ENCODE measurements at regions of chr15 and their contacts with region 1.

Region 1: DNA sequence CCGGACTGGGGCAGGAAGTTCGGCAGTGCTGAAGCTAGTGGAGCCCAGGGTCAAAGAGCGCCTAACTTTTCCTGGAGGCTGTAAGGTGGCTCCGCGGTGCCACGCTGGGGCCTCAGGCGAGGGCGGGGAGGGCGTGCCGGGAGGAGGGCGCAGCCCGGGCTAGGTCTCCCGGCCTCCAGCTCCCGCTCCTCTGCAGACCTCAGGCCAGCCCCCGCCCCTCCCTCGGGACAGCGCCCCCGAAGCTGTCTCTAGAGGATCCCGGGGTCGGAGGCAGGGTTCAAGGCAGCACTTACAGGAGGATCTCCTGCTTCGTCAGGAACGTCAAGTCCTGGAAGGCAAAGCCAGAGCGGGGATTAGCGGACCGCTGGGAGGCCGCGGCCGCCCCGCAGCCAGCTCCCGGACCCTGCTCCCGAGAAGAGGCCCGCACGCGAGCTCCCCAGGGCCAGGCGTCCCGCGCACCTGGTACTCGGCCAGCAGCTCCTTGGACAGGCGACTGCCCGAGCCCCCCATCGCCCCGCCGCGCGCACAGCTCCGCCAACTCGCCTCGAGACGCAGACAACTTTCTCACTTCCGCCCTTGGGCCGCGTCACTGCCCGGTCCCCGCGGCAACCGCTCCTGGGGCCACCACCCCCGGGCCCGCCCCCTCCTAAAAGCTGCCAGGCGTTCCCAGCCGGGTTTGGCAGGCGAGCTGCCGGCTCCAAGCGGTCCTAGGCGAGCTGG is at the start of gene CIB1:
- DNase-seq: peak; percentile 98
- H3K4me3 Mint-ChIP-seq: peak within 1 kb of the TSS; percentile 93
- H3K27ac Mint-ChIP-seq: peak within 1 kb of the TSS; percentile 94
- H3K4me1 Mint-ChIP-seq: peaks cover 57% of the 10 kb centered on the region
- H3K27me3 Mint-ChIP-seq: no peaks in the 10 kb centered on the region
- total RNA-seq, gene CIB1: 144 and 145 TPM in 2 replicates

Region 2: GRCh38 chr15:89982315-89983055 is 251.1 kb before region 1 on chr15:
- intact Hi-C with region 1: no loop called
- DNase-seq: no peak
- H3K4me3 Mint-ChIP-seq: no peak overlapping the region
- H3K27ac Mint-ChIP-seq: no peak overlapping the region
- H3K4me1 Mint-ChIP-seq: no peaks in the 10 kb centered on the region
- H3K27me3 Mint-ChIP-seq: peaks cover 13% of the 10 kb centered on the region

Region 3: DNA sequence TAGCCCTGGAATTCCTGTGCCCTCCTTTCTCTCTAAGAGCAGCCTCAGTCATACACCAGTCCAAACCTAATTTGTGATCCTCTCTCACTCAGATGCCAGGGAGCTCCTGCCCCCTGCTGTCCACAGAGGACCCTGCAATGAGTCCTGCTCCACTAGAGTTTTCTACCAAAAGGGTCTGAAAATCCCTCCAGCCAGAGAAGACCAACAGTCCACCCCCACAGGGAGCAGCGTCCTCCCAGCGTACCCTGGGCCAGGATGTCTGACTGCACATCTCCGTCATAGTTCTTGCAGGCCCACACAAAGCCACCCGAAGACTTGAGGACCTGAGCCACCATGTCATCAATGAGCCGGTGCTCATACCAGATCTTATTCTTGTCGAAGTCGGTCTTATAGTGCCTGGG is 146.7 kb before region 1 on chr15:
- intact Hi-C with region 1: no loop called
- DNase-seq: no peak
- H3K4me3 Mint-ChIP-seq: no peak overlapping the region
- H3K27ac Mint-ChIP-seq: no peak overlapping the region
- H3K4me1 Mint-ChIP-seq: peaks cover 4% of the 10 kb centered on the region
- H3K27me3 Mint-ChIP-seq: no peaks in the 10 kb centered on the region

Region 4: DNA sequence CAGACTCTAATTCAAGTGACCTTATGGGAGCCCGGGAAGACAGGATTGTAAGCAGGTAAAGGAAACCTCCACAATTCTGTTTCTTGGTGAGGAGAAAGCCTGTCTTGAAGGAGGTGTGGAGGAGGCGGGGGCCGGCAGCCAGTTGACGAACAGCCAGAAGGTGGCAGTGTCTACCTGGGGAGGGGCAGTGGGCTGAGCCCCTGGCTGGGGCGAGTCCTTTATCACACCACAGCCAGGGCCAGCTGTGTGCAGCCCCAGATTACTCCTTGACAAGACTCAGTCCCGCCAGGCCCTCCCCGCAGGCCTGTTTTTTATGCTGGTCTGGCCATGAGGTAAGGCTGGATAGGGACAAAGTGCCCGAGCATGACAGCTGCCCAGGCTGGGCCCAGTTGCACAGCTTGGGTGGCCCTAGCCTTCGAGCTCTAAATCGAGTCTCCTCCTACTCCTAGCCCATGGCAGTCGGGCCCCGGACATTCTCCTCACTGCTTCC is 90.3 kb before region 1 on chr15:
- intact Hi-C with region 1: loop called (anchors 1 kb)
- DNase-seq: peak; percentile 59
- H3K4me3 Mint-ChIP-seq: peak overlapping the region; percentile 1
- H3K27ac Mint-ChIP-seq: peak overlapping the region; percentile 52
- H3K4me1 Mint-ChIP-seq: peaks cover 26% of the 10 kb centered on the region
- H3K27me3 Mint-ChIP-seq: no peaks in the 10 kb centered on the region

Region 5: DNA sequence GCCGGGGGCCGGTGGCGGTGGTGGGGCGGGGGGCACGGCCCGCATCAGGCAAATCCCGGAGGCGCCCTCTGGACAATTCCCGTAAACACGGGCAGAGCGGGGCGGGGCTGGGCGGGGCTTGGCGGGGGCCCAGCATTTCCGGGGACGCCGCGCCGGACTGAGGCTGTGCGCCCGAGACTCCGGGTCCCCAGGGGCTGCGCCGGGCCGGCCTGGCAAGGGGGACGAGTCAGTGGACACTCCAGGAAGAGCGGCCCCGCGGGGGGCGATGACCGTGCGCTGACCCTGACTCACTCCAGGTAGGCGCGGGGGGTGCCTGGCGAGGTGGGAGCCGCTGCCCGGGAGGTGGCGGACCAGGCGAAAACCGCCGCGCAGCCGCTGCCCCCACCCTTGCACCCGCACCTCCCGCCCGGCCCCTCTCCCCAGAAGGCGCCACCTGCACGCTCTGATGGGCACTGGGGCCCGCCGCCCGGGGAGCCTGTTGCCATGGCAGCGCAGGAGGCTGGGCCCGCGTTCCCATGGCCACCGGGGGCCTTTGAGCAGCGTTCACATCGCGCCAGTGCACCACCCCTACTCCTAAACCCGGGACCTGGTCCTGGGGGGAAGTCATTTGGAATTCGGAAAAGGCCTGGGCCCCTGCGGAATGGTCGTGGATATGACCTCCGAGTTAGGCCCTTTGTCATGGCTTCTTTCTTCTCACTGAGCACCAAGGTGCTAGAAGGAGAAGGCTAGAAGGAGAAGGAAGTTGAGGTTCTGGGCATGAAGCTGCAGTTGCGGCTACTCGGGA is 48.6 kb before region 1 on chr15:
- intact Hi-C with region 1: loop called (anchors 1 kb)
- DNase-seq: peak; percentile 49
- H3K4me3 Mint-ChIP-seq: peak overlapping the region; percentile 87
- H3K27ac Mint-ChIP-seq: peak overlapping the region; percentile 75
- H3K4me1 Mint-ChIP-seq: peaks cover 31% of the 10 kb centered on the region
- H3K27me3 Mint-ChIP-seq: peaks cover 5% of the 10 kb centered on the region

Region 6: DNA sequence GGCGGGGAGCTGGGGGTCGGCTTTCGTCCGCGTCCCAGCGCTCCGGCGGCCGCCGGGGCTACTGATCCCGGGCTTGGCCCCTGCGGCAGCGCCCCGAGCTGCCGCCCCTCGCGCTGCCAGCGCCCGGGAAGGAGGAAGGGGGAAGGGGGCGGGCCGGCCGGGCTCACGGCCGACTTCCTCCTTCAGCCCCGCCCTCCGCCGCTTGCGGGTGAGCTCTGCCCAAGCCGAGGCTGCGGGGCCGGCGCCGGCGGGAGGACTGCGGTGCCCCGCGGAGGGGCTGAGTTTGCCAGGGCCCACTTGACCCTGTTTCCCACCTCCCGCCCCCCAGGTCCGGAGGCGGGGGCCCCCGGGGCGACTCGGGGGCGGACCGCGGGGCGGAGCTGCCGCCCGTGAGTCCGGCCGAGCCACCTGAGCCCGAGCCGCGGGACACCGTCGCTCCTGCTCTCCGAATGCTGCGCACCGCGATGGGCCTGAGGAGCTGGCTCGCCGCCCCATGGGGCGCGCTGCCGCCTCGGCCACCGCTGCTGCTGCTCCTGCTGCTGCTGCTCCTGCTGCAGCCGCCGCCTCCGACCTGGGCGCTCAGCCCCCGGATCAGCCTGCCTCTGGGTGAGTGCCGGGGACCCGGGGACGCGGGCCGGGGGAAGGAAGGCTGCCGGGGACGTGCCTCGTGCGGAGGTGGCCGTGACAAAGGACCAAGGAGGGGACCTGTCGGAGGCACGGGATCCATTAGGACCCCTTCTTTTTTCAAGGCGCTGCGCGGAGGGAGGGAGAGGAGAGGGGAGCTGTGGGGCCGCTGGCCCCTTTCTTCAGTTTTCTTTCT is 32.2 kb before region 1 on chr15 and contains the start of gene SEMA4B:
- intact Hi-C with region 1: loop called (anchors 1 kb)
- DNase-seq: peak; percentile 75
- H3K4me3 Mint-ChIP-seq: peak within 1 kb of the TSS; percentile 92
- H3K27ac Mint-ChIP-seq: peak within 1 kb of the TSS; percentile 67
- H3K4me1 Mint-ChIP-seq: peaks cover 33% of the 10 kb centered on the region
- H3K27me3 Mint-ChIP-seq: peaks cover 5% of the 10 kb centered on the region
- total RNA-seq, gene SEMA4B: 17.5 and 18.8 TPM in 2 replicates

Region 7: DNA sequence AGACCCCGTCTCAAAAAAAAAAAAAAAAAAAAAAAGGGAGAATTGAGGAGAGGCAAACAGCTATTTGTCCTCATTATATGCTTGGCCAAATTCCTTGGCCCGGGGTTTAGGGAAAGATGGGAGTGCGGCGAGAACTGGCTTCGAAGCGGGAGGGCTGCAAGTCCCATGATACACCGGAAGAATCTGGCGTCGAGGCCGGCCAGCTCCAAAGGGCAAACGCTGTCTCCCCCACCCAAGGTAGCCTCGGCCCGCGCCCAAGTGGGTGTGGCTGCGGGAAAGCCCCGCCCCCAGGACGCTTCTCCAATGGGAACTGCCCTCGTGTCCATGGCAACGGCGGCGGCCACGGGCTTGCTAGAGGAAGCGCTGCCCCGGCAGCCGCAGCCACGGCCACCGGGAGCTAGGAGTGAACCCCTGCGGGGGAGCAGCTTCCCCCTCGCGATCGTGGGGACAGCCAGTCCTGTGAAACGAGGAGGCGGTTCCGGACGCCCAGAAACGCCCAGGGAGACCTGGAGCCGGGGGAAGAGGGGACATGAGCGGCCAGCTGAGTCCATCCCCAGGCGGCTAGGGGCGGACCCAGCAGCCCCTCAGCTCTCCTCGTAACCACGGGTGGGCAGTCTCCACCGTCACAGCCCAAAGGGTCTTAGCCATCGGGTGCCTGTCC is 15.8 kb after region 1 on chr15 and contains the start of gene TTLL13:
- intact Hi-C with region 1: loop called (anchors 1 kb)
- DNase-seq: peak; percentile 82
- H3K4me3 Mint-ChIP-seq: peak within 1 kb of the TSS; percentile 73
- H3K27ac Mint-ChIP-seq: peak within 1 kb of the TSS; percentile 48
- H3K4me1 Mint-ChIP-seq: peaks cover 20% of the 10 kb centered on the region
- H3K27me3 Mint-ChIP-seq: peaks cover 8% of the 10 kb centered on the region
- total RNA-seq, gene TTLL13: 0.29 and 0.65 TPM in 2 replicates

Region 8: DNA sequence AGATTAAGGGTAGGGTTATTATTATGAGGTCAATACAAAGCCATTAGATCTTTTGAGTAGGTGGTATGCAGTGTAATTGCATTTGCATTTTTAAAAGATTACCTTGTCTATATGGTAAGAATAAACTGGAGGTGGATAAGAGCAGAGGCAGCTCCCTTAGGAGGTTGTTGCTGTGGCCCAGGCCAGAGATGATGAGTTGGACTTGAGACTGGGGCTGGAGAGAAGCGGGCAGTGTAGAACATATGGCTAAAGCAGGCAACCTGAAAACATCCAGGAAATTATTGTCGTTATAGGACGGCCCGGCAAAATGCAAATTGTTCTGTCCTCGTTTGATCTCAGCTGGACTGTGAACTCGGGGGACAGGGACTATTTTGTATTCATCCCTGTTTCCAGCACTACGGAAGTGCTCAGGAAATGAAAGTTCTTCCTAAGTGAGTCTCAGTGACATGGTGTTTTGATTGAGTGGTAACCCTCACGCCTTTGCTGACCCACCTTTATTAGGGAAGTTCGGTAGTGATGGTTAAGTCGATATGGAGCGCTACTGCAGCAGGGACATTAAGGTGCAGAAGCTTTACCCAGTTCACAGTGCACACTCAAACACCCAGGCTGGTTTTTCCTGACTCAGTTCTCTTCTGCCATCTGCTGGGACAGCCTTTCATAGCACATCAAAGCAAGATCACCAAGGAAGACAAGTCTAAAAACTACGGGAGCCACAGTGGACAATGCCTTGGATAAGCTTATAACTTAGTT is 816.0 kb after region 1 on chr15:
- intact Hi-C with region 1: no loop called
- DNase-seq: peak; percentile 51
- H3K4me3 Mint-ChIP-seq: no peak overlapping the region
- H3K27ac Mint-ChIP-seq: no peak overlapping the region
- H3K4me1 Mint-ChIP-seq: peaks cover 20% of the 10 kb centered on the region
- H3K27me3 Mint-ChIP-seq: peaks cover 41% of the 10 kb centered on the region

Measured in activated T-helper 1 cell treated with anti-CD3 and anti-CD28 coated beads, Interleukin-12 subunit alpha, Interleukin-12 subunit beta, Interleukin-2, Interleukin-4 antibody, amounts not matched to agents 30 ng/mL and 10 ng/mL and 1 ng/mL, durations not matched to agents 14 hours and 24 hours and 36 hours (primary cell).